Cardiac septum (tissue), 1 donor: ENCODE measurements at regions of chr1 and their contacts with region 1.

Region 1: GRCh38 chr1:61184040-61184713 is 101.8 kb downstream of the NFIA start:
- DNase-seq: peak; percentile 93

Region 2: DNA sequence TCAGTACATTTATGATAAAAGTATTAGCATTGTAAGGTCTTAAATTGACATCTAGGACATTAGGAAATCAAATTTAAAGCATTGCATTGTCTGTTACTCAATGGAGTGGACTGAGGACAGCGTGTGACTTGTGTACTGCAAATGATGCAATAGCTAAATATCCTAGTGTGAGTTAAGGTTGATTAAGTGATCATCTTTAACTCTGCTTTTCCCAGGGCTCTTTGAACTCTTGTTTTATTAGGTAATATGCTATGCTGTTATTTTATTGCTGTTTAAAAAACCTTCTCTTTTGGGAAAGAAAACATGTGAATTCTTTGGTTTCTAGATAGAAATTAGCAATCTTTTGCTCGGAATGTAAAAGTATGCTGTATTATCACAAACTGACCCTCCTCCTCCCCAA is 63.2 kb before region 1 on chr1:
- intact Hi-C with region 1: loop called (anchors 5 kb)
- DNase-seq: no peak

Region 3: GRCh38 chr1:61138921-61139774 is 45.0 kb before region 1 on chr1:
- intact Hi-C with region 1: no loop called
- DNase-seq: no peak

Region 4: DNA sequence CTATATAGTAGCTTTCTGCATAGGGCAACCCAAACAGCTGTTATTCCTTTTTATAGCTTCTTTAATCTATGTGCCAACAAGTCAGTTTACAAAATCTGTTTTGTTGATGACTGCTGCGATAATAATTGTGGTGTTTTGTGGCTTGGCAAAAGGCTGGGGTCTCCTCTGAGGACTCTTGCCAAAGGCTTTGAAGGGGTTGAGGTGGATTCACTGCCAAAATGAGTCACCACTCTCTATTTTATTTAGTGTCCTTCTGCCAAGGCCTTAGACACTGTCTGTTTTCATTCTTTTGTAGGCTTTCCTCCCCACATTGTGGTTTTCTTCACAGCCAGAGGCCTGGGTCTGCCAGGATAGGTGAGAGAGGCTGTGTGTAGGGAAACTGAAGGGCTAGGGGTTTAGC is 59.9 kb after region 1 on chr1:
- intact Hi-C with region 1: loop called (anchors 5 kb)
- DNase-seq: no peak

Region 5: GRCh38 chr1:61337981-61338848 is 154.0 kb after region 1 on chr1:
- intact Hi-C with region 1: loop called (anchors 5 kb)
- DNase-seq: peak; percentile 80